B cell (primary cell): ENCODE measurements at regions of chr9 and their contacts with region 1.

Region 1: GRCh38 chr9:22452415-22453010 is 5.9 kb downstream of the DMRTA1 start:
- DNase-seq: peak; percentile 64
- ATAC-seq: no peak
- H3K4me3 ChIP-seq: no peak overlapping the region
- H3K4me3 Mint-ChIP-seq: no peak overlapping the region
- H3K27ac ChIP-seq: no peak overlapping the region
- H3K27ac Mint-ChIP-seq: no peak overlapping the region
- H3K4me1 ChIP-seq: peaks cover 3 to 6% of the 10 kb centered on the region in 2 donors
- H3K4me1 Mint-ChIP-seq: peaks cover 6% of the 10 kb centered on the region
- H3K27me3 ChIP-seq: peaks cover 0 to 33% (median 12%) of the 10 kb centered on the region in 4 experiments
- H3K27me3 Mint-ChIP-seq: peaks cover 62% of the 10 kb centered on the region
- CTCF ChIP-seq: peak; percentile 95

Region 2: GRCh38 chr9:22244141-22245011 is 208.1 kb before region 1 on chr9:
- CTCF ChIA-PET with region 1: interaction called, 37 read pairs
- POLR2A ChIA-PET with region 1: no interaction called
- intact Hi-C with region 1: loop called (anchors 1 kb)
- DNase-seq: peak; percentile 67
- ATAC-seq: peak; percentile 56
- H3K4me3 ChIP-seq: peak overlapping the region in 2 of 5 experiments; percentile 7 to 30
- H3K4me3 Mint-ChIP-seq: peak overlapping the region; percentile 35
- H3K27ac ChIP-seq: no peak overlapping the region
- H3K27ac Mint-ChIP-seq: no peak overlapping the region
- H3K4me1 ChIP-seq: peaks cover 28 to 29% of the 10 kb centered on the region in 2 donors
- H3K4me1 Mint-ChIP-seq: peaks cover 36% of the 10 kb centered on the region
- H3K27me3 ChIP-seq: no peaks in the 10 kb centered on the region
- H3K27me3 Mint-ChIP-seq: peaks cover 13% of the 10 kb centered on the region
- CTCF ChIP-seq: peak; percentile 79

Region 3: DNA sequence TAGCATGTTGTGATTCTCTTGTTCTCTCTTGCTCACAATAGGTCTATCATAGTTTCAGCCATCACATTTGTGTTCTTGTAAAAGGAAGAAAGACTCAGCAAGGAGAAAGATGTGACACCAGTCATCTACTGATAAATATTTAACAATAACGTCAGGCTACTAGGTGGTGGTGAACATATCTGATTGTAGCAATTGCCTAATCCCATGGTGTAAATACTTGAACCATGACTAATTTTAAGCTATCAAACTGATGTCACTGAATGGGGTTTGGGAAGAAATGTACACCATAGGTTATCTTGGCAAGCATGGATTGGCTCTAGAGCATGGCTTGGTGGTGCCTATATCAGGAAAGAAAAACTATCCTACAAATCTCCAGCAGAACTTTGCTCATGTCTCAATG is 10.7 kb after region 1 on chr9:
- CTCF ChIA-PET with region 1: interaction called, 14 read pairs
- POLR2A ChIA-PET with region 1: no interaction called
- intact Hi-C with region 1: no loop called
- DNase-seq: no peak
- ATAC-seq: no peak
- H3K4me3 ChIP-seq: no peak overlapping the region
- H3K4me3 Mint-ChIP-seq: no peak overlapping the region
- H3K27ac ChIP-seq: no peak overlapping the region
- H3K27ac Mint-ChIP-seq: no peak overlapping the region
- H3K4me1 ChIP-seq: no peaks in the 10 kb centered on the region
- H3K4me1 Mint-ChIP-seq: no peaks in the 10 kb centered on the region
- H3K27me3 ChIP-seq: peaks cover 0 to 19% (median 3%) of the 10 kb centered on the region in 4 experiments
- H3K27me3 Mint-ChIP-seq: peaks cover 10% of the 10 kb centered on the region
- CTCF ChIP-seq: no peak